ENCODE measurements at regions of chr21 and their contacts with region 1.

Region 1: GRCh38 chr21:44927587-44928461 is 7.1 kb upstream of the ITGB2 start:
- DNase-seq: no peak
- H3K4me3 ChIP-seq: peak overlapping the region in 2 of 4 donors; percentile 16 to 48
- H3K27ac ChIP-seq: peak overlapping the region; percentile 31 to 65 (median 44)
- H3K4me1 ChIP-seq: peaks cover 50 to 70% (median 50%) of the 10 kb centered on the region in 3 donors
- H3K27me3 ChIP-seq: peaks cover 11 to 67% (median 17%) of the 10 kb centered on the region in 4 donors
- CTCF ChIP-seq: peak in 1 of 6 experiments; percentile 9
- POLR2A ChIP-seq: no peak

Region 2: GRCh38 chr21:44892536-44893277 is 35.1 kb before region 1 on chr21:
- intact Hi-C with region 1: loop called (anchors 5 kb)
- DNase-seq: no peak
- H3K4me3 ChIP-seq: no peak overlapping the region
- H3K27ac ChIP-seq: no peak overlapping the region
- H3K4me1 ChIP-seq: peaks cover 0 to 27% (median 14%) of the 10 kb centered on the region in 3 donors
- H3K27me3 ChIP-seq: peaks cover 0 to 75% (median 0%) of the 10 kb centered on the region in 4 donors
- CTCF ChIP-seq: peak; percentile 59 to 87 (median 85)
- POLR2A ChIP-seq: no peak